Right cardiac atrium (tissue), 5 donors: ENCODE measurements at regions of chr16 and their contacts with region 1.

Region 1: GRCh38 chr16:81711657-81712319 is 67.3 kb upstream of the PLCG2 start:
- DNase-seq: no peak
- ATAC-seq: peak in 1 of 2 donors; percentile 27
- H3K4me3 ChIP-seq: no peak overlapping the region
- H3K27ac ChIP-seq: no peak overlapping the region
- H3K4me1 ChIP-seq: no peaks in the 10 kb centered on the region
- H3K27me3 ChIP-seq: no peaks in the 10 kb centered on the region

Region 2: GRCh38 chr16:81632392-81633146 is 79.2 kb before region 1 on chr16:
- intact Hi-C with region 1: loop called in 1 of 4 experiments (anchors 10 kb)
- DNase-seq: no peak
- ATAC-seq: no peak
- H3K4me3 ChIP-seq: no peak overlapping the region
- H3K27ac ChIP-seq: no peak overlapping the region
- H3K4me1 ChIP-seq: no peaks in the 10 kb centered on the region
- H3K27me3 ChIP-seq: no peaks in the 10 kb centered on the region

Region 3: GRCh38 chr16:81657224-81657623 is 54.6 kb before region 1 on chr16:
- intact Hi-C with region 1: no loop called
- DNase-seq: peak in 1 of 3 donors; percentile 17
- ATAC-seq: no peak
- H3K4me3 ChIP-seq: no peak overlapping the region
- H3K27ac ChIP-seq: no peak overlapping the region
- H3K4me1 ChIP-seq: no peaks in the 10 kb centered on the region
- H3K27me3 ChIP-seq: no peaks in the 10 kb centered on the region

Region 4: DNA sequence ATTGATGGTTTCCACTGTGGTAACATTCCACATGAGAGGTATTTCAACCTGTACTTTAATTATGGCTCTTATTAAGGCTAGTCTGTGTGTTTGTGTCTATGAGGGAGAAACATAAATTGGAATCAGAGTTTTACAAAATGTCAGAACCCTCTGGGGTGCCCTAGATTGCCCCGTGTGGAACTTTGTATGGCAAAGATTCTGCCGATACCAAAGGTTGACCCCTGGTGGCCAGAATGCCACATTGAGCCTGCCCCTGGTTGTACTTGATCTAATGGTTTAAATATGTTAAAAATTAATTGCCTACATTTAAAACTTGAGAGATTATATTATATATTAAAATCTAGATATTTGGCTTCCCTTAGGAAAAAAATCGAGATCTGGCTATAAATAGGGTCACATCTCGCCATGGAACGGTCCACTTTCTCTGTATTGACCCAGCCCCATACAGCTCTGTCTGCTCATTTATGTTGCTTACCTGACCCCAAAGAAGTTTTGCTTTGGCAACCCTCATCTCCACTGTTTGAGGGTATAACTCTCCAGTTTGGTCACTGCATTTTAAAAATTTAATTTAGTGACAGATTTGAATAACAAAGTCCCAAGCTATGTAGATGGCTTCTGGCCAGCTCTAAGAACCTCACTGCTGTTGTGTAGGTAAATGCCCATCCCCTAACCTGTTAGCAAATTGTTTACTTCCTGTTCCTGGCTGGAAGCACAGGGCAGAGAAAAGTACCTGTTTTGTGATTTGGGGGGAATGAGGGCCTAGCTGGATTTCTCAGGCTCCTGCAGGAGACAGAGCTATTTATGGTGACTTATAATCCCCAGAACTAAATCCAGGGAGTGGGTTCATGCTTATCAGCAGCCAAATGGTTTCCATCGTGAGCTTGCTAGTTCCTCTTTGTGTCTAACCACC is 162.3 kb after region 1 on chr16:
- intact Hi-C with region 1: no loop called
- DNase-seq: peak; percentile 50 to 80 (median 77)
- ATAC-seq: peak; percentile 60 to 75
- H3K4me3 ChIP-seq: no peak overlapping the region
- H3K27ac ChIP-seq: no peak overlapping the region
- H3K4me1 ChIP-seq: peaks cover 2% of the 10 kb centered on the region
- H3K27me3 ChIP-seq: no peaks in the 10 kb centered on the region